SK-N-SH (cell line): ENCODE measurements at regions of chr9 and their contacts with region 1.

Region 1: DNA sequence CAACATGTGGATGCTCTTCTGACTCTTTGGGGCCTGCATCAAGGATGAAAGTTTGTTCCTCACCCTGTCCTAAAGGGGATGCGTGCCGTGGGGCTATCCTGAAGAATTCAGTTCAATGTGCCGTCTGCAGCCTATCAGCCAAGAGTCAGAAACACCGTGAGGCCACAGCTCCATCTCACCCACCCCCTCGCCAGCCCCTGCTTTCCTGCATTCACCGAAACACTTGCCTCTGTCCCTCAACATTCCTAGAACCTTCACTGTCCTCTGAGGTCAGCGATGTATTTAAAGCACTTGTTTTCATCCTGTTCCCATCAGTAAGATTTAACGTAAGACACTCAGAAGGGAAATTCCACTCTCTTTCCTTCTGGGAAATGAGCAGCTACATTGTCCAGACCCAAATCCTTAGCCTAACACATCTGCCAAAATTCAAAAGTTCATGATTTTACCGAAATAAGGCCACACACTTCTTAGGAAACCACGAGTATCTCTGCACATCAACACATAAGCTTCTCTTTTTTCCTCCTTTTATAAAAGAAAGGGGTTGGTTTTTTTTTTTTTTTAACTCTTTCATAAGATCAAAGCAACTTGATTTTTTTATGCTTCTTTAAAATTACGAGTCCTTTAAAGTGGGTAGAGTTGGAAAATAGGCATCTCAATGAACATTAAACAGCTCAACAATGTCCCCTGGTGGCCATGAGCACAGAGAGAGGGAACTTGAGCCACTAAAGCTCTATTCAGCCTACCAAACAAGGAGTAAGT is 100.7 kb downstream of the SUSD1 start:
- DNase-seq: peak; percentile 53
- H3K4me3 ChIP-seq: peak overlapping the region in 1 of 2 experiments; percentile 37; a peak in 1 of 4 replicates
- H3K27ac ChIP-seq: peak overlapping the region; percentile 70 to 85
- H3K4me1 ChIP-seq: peaks cover 6 to 18% of the 10 kb centered on the region in 2 experiments; a peak in 3 of 4 replicates
- H3K27me3 ChIP-seq: no peaks in the 10 kb centered on the region
- CTCF ChIP-seq: peak; percentile 99
- EP300 ChIP-seq: peak; percentile 84 to 90
- RAD21 ChIP-seq: peak; percentile 93

Region 2: GRCh38 chr9:111759762-111760639 is 314.4 kb before region 1 on chr9:
- CTCF ChIA-PET with region 1: interaction called, 94 read pairs
- POLR2A ChIA-PET with region 1: interaction called, 3 read pairs
- DNase-seq: peak; percentile 53
- H3K4me3 ChIP-seq: no peak overlapping the region; a peak in 1 of 4 replicates
- H3K27ac ChIP-seq: peak overlapping the region; percentile 32 to 47; a peak in 2 of 4 replicates
- H3K4me1 ChIP-seq: 0 out of 4 replicates have a peak, but pooled peaks cover 0 to 4% of the 10 kb centered on the region in 2 experiments
- H3K27me3 ChIP-seq: no peaks in the 10 kb centered on the region
- CTCF ChIP-seq: peak; percentile 76
- EP300 ChIP-seq: peak in 1 of 2 experiments; percentile 32; a peak in 1 of 4 replicates
- RAD21 ChIP-seq: peak; percentile 95

Region 3: GRCh38 chr9:112086627-112087026 is 12.2 kb after region 1 on chr9:
- CTCF ChIA-PET with region 1: interaction called, 21 read pairs
- POLR2A ChIA-PET with region 1: interaction called, 4 read pairs
- DNase-seq: peak; percentile 42
- H3K4me3 ChIP-seq: no peak overlapping the region; a peak in 1 of 4 replicates
- H3K27ac ChIP-seq: no peak overlapping the region
- H3K4me1 ChIP-seq: no peaks in the 10 kb centered on the region
- H3K27me3 ChIP-seq: no peaks in the 10 kb centered on the region
- CTCF ChIP-seq: peak; percentile 63
- EP300 ChIP-seq: no peak
- RAD21 ChIP-seq: peak; percentile 75